ENCODE measurements at regions of chr11 and their contacts with region 1.

Region 1: DNA sequence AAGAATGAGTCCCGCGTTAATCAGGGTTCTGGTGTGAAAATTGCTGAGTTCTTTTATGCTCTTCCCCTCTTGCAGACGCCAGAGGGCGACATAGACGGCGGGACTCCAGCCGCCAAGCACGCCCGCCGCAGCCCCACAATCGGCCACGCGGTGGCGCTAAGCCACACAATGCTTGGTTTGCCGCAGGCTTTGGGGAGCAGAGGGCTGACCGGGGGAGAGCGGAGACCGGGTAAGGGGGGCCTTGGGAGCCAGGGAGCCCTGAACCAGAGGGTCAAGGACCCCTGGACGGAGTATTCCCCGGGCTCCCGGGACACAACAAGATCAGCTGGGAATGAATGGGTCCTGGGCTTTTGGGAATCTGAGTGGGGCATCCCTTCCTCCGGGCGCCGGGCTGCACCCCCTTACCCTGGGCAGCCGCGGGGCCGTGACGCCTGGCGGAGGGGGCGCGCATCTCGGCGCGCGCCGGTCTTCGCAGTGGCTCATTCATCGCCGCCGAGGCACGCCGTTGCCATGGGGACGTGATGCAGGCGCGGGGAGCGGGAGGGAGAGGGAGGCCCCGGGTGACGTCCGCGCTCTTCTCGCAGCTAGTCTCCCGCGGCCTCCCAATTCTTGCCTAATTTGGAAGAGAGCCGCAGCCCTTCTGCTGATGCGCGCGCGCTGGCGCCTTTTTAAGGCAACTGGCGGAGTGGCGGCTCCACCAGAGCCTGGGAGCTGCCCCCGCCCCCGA is 12.2 kb upstream of the NPAS4 start:
- DNase-seq: peak; percentile 91
- H3K4me3 Mint-ChIP-seq: peak overlapping the region; percentile 62
- H3K27ac Mint-ChIP-seq: no peak overlapping the region
- H3K4me1 Mint-ChIP-seq: peaks cover 5% of the 10 kb centered on the region
- H3K27me3 Mint-ChIP-seq: peaks cover 18% of the 10 kb centered on the region

Region 2: DNA sequence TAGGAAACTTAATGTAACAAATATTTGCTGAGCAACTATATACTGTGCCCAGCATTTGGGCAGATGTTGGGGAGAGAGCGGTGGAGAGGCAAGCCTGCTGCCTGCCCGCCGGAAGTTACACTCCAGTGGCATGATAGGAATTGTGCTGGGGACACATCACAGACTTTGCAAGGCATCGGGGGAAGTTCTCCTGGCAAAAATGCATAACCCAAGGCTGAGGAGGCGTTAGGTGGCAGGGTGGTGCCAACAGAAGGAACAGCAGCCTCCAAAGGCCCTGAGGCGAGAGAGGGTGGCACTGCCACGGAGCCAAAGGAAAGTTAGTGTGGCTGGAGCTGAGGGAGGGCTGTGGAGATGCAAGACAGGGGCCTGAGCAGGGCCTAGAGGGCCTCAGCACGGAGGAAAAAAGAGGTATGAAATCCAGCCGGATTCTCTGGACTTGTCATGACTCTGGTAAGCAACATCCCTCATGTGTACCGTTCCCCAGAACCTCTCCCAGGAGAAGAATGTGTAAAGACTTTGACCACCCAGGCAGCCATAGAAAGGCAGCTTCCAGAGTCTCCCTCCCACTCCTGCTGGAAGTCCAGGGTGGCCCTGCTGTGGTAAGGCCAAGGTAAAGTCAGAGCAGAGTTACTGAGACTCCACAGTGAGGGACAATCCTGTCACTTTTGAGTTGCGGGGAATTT is 216.3 kb before region 1 on chr11:
- CTCF ChIA-PET with region 1: no interaction called
- POLR2A ChIA-PET with region 1: no interaction called
- DNase-seq: no peak
- H3K4me3 Mint-ChIP-seq: no peak overlapping the region
- H3K27ac Mint-ChIP-seq: no peak overlapping the region
- H3K4me1 Mint-ChIP-seq: peaks cover 4% of the 10 kb centered on the region
- H3K27me3 Mint-ChIP-seq: no peaks in the 10 kb centered on the region

Region 3: DNA sequence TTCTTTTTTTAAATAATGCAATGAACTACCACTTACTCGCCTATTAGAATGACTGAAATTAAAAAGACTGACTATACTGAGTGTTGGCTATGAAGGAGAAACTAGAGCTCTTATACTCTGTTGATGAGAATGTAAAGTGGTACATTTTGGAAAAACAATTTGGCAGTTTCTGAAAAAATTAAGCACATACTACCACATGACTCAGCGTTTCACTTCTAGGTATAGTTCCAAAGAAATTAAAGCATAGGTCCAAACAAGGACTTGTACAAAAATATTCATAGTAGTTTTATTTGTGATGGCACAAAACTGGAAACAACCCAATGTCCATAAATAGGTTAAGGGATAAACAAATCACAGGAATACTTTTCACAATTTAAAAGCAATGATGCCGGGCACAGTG is 14.7 kb before region 1 on chr11:
- CTCF ChIA-PET with region 1: no interaction called
- POLR2A ChIA-PET with region 1: no interaction called
- DNase-seq: no peak
- H3K4me3 Mint-ChIP-seq: no peak overlapping the region
- H3K27ac Mint-ChIP-seq: no peak overlapping the region
- H3K4me1 Mint-ChIP-seq: no peaks in the 10 kb centered on the region
- H3K27me3 Mint-ChIP-seq: peaks cover 5% of the 10 kb centered on the region

Region 4: GRCh38 chr11:66421492-66422205 is 13.0 kb after region 1 on chr11:
- CTCF ChIA-PET with region 1: interaction called, 22 read pairs
- POLR2A ChIA-PET with region 1: interaction called, 10 read pairs
- DNase-seq: peak; percentile 90
- H3K4me3 Mint-ChIP-seq: no peak overlapping the region
- H3K27ac Mint-ChIP-seq: no peak overlapping the region
- H3K4me1 Mint-ChIP-seq: peaks cover 17% of the 10 kb centered on the region
- H3K27me3 Mint-ChIP-seq: peaks cover 31% of the 10 kb centered on the region

Region 5: DNA sequence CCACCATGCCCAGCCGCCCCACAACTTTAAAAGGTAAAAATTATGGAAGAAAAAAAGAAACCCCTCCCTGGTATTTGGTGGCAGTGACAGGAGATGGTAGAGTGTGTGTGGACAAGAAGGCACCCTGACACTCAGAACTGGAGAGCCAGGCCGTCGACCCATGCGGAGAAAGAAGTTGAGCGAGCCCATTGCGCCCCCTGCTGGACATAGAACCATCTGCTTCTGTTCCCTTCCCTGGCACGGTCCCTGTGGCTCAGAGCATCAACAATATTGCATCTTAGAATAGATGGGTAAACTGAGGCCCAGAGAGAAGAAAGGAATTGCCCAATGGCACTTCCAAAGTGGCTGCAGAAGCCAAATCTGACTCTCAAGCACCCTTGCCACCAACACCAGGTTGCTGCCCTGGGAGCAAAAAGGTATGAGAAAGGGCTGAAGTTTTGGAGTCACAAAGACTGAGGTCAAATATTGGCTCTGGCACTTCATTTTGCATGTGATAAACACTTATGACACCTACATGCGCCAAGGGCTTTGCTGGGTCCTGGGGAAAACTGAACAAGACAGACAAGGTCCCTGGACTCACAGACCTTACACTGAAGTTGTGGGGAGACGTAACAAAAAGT is 21.4 kb after region 1 on chr11:
- CTCF ChIA-PET with region 1: interaction called, 34 read pairs
- POLR2A ChIA-PET with region 1: no interaction called
- DNase-seq: peak; percentile 79
- H3K4me3 Mint-ChIP-seq: no peak overlapping the region
- H3K27ac Mint-ChIP-seq: no peak overlapping the region
- H3K4me1 Mint-ChIP-seq: no peaks in the 10 kb centered on the region
- H3K27me3 Mint-ChIP-seq: no peaks in the 10 kb centered on the region

Region 6: DNA sequence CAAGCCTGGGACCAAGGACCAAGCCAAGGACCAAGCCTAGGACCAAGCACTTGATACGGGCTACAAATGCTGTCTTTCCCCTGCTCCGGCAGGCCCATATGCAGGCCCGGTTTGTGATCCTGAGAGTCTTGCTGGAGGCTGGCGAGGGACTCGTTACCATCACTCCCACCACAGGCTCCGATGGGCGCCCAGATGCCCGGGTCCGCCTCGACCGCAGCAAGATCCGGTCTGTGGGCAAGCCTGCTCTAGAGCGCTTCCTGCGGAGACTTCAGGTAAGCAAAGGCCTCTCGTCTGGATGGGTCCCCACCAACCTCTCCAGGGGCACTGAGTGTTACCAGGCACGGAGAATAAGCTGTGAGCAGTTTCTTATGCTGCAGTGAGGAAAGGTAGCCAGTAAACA is 88.6 kb after region 1 on chr11:
- CTCF ChIA-PET with region 1: no interaction called
- POLR2A ChIA-PET with region 1: no interaction called
- DNase-seq: no peak
- H3K4me3 Mint-ChIP-seq: no peak overlapping the region
- H3K27ac Mint-ChIP-seq: no peak overlapping the region
- H3K4me1 Mint-ChIP-seq: no peaks in the 10 kb centered on the region
- H3K27me3 Mint-ChIP-seq: no peaks in the 10 kb centered on the region